Tibial artery (tissue), 4 donors: ENCODE measurements at regions of chr4 and their contacts with region 1.

Region 1: GRCh38 chr4:37977471-37978247 is 17.5 kb downstream of the PTTG2 start:
- DNase-seq: peak; percentile 68 to 85
- H3K4me3 ChIP-seq: peak overlapping the region; percentile 82 to 95
- H3K27ac ChIP-seq: peak overlapping the region; percentile 93 to 97
- H3K4me1 ChIP-seq: peaks cover 0 to 70% (median 28%) of the 10 kb centered on the region in 4 donors
- H3K27me3 ChIP-seq: no peaks in the 10 kb centered on the region
- CTCF ChIP-seq: peak; percentile 66 to 77

Region 2: DNA sequence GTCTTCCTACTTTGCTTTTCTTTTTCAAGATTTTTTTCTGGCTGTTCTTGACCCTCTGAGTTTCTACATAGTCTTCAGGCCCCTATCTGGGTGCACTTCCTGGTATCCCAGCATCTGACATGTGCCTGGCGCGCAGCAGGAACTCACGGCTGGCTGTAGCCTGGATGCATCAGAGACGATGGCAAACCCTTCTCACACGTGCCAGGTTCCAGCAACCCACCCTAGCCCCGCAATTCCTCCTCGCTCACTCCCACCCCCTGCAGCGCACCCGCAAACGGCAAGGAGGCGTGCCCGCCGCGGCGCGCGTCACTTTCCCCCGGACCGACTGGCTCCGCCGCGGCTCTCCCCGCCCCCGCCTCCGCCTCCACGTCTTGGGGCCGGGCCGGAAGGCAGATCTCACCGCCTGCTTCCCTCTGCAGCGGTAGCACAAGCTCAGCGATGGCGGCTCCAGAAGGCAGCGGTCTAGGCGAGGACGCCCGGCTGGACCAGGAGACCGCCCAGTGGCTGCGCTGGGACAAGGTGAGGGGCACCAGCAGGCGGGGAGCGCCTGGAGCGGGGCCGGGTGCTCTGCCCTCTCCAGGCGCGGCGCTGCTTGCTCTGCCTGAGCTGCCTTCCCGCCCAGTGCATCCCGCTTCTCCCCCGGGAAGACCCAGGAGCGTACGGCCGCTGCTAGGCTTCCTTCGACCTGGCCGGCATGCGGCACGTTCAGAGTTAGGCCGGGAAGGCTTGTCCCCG is 151.2 kb before region 1 on chr4 and contains the start of gene PGM2:
- intact Hi-C with region 1: loop called (anchors 10 kb)
- DNase-seq: peak; percentile 82 to 93
- H3K4me3 ChIP-seq: peak within 1 kb of the TSS; percentile 71 to 91
- H3K27ac ChIP-seq: peak within 1 kb of the TSS; percentile 85 to 93
- H3K4me1 ChIP-seq: peaks cover 0 to 22% (median 13%) of the 10 kb centered on the region in 4 donors
- H3K27me3 ChIP-seq: no peaks in the 10 kb centered on the region
- CTCF ChIP-seq: no peak